Activated T-helper 1 cell treated with anti-CD3 and anti-CD28 coated beads, Interleukin-12 subunit alpha, Interleukin-12 subunit beta, Interleukin-2, Interleukin-4 antibody, amounts not matched to agents 30 ng/mL and 10 ng/mL and 1 ng/mL, durations not matched to agents 14 hours and 24 hours and 36 hours (primary cell): ENCODE measurements at regions of chr22 and their contacts with region 1.

Region 1: DNA sequence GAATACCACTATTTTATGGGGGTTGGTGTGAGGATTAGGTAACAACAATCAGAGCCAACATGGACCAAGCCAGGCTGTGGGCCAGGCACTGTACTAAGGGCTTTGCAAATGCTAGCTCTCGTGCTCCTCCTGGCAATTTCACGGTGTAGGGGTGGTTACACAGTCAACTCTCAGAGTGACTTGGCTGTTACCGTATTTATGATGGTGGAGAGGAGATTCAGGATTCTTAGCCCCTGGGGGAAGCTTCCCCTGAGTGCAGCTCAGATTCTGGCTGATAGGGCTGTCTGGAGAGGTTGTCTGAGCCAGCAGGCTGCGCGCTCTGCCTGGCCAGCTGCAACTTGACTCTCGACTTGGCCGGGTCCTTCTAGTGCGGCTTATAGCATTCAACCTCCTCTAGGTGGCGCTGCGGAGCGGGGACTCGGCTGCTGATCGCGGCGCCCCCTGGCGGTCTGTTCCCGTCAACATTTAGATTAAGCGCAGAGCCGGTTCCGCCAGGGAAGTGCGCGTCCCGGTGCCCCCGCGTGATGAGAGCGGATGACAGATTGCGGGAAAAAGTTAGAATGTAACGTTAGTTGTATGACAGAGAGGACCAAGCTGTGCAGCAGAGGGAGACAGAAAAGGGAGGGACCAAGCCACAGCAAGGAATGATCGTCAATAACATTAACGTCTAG is 4.5 kb upstream of the NCF4 start:
- DNase-seq: peak; percentile 90
- H3K4me3 Mint-ChIP-seq: peak overlapping the region; percentile 58
- H3K27ac Mint-ChIP-seq: peak overlapping the region; percentile 73
- H3K4me1 Mint-ChIP-seq: peaks cover 56% of the 10 kb centered on the region
- H3K27me3 Mint-ChIP-seq: peaks cover under 1% of the 10 kb centered on the region

Region 2: DNA sequence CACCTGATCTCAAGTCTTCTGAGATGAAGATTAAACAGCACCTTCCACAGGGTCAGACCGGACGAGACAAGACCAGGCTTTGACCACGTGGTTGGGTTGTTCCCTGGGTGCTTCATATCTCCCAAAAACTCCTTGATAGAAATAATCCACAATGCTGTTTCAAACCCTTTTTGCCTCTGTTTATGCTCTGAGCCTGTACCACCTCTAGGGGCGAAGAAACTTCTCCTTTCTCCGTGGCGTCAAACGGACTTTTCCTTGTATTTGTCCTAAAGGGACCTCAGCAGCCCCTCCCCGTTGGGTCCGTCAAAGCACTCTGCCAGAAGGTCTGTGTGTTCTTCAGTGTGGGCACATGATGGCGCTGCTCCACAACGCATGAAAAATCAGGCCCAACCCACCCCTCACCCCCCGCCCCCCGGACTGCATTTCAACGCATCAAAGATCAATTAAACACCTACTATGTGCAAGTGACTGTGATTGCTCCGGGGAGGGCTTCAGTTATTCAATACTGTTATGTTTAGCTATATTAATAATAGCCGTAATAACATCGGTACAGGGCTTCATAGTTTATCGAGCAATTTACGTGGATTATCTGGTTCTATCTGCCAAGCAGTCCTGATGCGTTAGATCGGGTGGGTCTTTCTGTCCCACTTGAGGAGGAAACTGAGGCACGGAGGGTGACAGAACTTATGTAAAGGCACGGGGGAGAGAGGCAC is 310.0 kb before region 1 on chr22:
- intact Hi-C with region 1: loop called (anchors 1 kb)
- DNase-seq: peak; percentile 16
- H3K4me3 Mint-ChIP-seq: no peak overlapping the region
- H3K27ac Mint-ChIP-seq: no peak overlapping the region
- H3K4me1 Mint-ChIP-seq: peaks cover 29% of the 10 kb centered on the region
- H3K27me3 Mint-ChIP-seq: peaks cover 6% of the 10 kb centered on the region

Region 3: DNA sequence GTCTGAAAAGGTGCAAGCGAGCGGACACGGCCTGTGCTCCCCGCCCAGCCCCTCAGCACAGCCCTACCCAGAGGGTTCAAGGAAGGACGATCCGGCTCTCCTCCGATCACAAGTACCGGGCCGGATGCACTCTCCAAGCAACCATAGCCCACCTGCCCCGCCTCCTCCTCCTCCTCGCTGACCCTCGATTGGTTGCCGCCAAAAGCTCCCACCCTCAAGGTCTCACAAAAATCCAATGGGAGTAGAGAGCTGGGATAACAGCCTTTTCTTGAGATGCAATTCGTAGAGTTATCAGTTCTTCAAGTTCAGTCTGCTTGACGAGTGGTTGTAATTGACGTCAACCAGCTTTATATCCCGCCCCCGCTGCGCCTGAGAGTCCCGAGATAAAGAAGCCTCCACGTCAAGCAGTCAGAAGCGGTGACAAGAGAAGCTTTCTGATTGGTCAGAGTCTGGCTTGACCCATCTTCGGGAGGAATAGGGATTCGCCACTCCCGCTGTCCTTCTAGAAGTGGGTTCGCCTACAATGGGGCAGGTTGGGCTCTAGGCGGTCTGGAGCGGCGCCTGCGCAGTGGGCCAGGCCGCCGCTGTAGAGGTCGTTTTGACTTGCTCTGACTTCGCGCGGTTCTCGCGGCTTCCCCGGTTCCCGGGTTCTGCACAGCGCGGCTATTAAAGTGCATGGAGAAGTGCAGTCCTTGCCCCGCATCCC is 80.1 kb before region 1 on chr22 and contains the start of gene IFT27:
- intact Hi-C with region 1: loop called (anchors 1 kb)
- DNase-seq: peak; percentile 97
- H3K4me3 Mint-ChIP-seq: peak within 1 kb of the TSS; percentile 92
- H3K27ac Mint-ChIP-seq: peak within 1 kb of the TSS; percentile 94
- H3K4me1 Mint-ChIP-seq: peaks cover 36% of the 10 kb centered on the region
- H3K27me3 Mint-ChIP-seq: no peaks in the 10 kb centered on the region
- total RNA-seq, gene IFT27: 26.0 and 30.9 TPM in 2 replicates

Region 4: GRCh38 chr22:36790648-36791047 is 65.6 kb before region 1 on chr22:
- intact Hi-C with region 1: loop called (anchors 1 kb)
- DNase-seq: peak; percentile 29
- H3K4me3 Mint-ChIP-seq: no peak overlapping the region
- H3K27ac Mint-ChIP-seq: no peak overlapping the region
- H3K4me1 Mint-ChIP-seq: peaks cover 15% of the 10 kb centered on the region
- H3K27me3 Mint-ChIP-seq: peaks cover 4% of the 10 kb centered on the region

Region 5: GRCh38 chr22:36839356-36840073 is 16.7 kb before region 1 on chr22:
- intact Hi-C with region 1: no loop called
- DNase-seq: no peak
- H3K4me3 Mint-ChIP-seq: no peak overlapping the region
- H3K27ac Mint-ChIP-seq: no peak overlapping the region
- H3K4me1 Mint-ChIP-seq: peaks cover 13% of the 10 kb centered on the region
- H3K27me3 Mint-ChIP-seq: peaks cover 6% of the 10 kb centered on the region

Region 6: DNA sequence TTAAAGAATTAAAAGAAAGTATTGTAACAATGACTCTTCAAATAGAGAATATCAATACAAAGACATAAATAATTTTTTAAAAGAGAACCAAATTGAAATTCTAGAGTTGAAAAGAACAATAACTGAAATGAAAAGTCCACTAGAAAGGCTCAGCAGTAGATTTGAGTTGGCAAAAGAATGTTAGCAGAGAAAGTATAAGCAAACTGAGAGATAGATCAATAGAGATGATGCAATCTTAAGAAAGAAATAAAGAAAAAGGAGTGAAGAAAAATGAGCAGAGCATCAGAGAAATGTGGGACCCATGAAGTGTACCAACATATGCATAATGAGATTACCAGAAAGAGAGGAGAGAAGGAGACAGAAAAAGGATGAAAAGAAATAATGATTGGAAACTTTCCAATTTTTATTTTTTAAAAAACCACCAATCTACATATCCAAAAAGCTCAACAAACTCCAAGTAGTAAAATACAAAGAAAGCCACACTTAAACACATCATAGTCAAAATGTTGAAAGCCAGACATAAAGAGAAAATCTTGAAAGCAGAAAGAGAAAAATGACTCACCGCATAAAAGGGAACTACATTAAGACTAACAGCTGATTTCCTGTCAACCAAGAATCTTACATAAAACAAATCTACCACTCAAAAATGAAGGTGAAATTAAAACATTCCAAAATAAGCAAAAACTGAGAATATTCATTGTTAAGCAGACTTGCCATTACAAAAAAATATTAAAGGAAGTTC is 25.4 kb after region 1 on chr22:
- intact Hi-C with region 1: no loop called
- DNase-seq: no peak
- H3K4me3 Mint-ChIP-seq: no peak overlapping the region
- H3K27ac Mint-ChIP-seq: peak overlapping the region; percentile 71
- H3K4me1 Mint-ChIP-seq: peaks cover 14% of the 10 kb centered on the region
- H3K27me3 Mint-ChIP-seq: peaks cover 2% of the 10 kb centered on the region

Region 7: GRCh38 chr22:36901411-36902142 is 45.3 kb after region 1 on chr22:
- intact Hi-C with region 1: loop called (anchors 5 kb)
- DNase-seq: peak; percentile 49
- H3K4me3 Mint-ChIP-seq: peak overlapping the region; percentile 43
- H3K27ac Mint-ChIP-seq: peak overlapping the region; percentile 85
- H3K4me1 Mint-ChIP-seq: peaks cover 46% of the 10 kb centered on the region
- H3K27me3 Mint-ChIP-seq: peaks cover 13% of the 10 kb centered on the region

Region 8: DNA sequence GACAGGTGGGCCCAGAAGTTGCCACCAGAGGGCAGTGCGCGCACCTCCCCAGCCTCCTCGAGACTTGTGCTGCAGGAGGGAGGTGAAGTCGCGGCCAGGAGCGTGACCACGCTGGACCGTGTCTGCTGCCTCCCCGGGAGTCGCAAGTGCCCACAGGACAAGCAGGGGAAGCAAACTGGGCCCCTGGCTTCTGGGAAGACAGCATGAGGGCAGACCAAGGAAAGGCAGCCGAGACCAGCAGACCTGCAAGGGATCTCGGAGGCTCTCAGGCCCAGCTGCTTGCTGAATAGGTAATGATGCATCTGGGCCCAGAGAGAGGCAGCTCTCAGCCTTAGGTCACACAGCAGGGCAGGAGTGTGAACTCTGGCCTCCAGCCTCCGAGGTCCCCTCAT is 310.4 kb after region 1 on chr22:
- intact Hi-C with region 1: loop called (anchors 2 kb)
- DNase-seq: peak; percentile 72
- H3K4me3 Mint-ChIP-seq: peak overlapping the region; percentile 75
- H3K27ac Mint-ChIP-seq: peak overlapping the region; percentile 69
- H3K4me1 Mint-ChIP-seq: peaks cover 78% of the 10 kb centered on the region
- H3K27me3 Mint-ChIP-seq: peaks cover 4% of the 10 kb centered on the region